Activated CD4-positive, alpha-beta T cell treated with anti-CD3 and anti-CD28 coated beads, Interleukin-2, amount 10 ng/mL, durations not matched to agents 24 days and 14 days (primary cell): ENCODE measurements at regions of chr2 and their contacts with region 1.

Region 1: GRCh38 chr2:176126929-176127773 is 2.4 kb upstream of the HOXD8 start:
- DNase-seq: peak; percentile 87
- H3K4me3 Mint-ChIP-seq: no peak overlapping the region
- H3K27ac Mint-ChIP-seq: no peak overlapping the region
- H3K4me1 Mint-ChIP-seq: peaks cover 8% of the 10 kb centered on the region
- H3K27me3 Mint-ChIP-seq: peaks cover 74% of the 10 kb centered on the region

Region 2: DNA sequence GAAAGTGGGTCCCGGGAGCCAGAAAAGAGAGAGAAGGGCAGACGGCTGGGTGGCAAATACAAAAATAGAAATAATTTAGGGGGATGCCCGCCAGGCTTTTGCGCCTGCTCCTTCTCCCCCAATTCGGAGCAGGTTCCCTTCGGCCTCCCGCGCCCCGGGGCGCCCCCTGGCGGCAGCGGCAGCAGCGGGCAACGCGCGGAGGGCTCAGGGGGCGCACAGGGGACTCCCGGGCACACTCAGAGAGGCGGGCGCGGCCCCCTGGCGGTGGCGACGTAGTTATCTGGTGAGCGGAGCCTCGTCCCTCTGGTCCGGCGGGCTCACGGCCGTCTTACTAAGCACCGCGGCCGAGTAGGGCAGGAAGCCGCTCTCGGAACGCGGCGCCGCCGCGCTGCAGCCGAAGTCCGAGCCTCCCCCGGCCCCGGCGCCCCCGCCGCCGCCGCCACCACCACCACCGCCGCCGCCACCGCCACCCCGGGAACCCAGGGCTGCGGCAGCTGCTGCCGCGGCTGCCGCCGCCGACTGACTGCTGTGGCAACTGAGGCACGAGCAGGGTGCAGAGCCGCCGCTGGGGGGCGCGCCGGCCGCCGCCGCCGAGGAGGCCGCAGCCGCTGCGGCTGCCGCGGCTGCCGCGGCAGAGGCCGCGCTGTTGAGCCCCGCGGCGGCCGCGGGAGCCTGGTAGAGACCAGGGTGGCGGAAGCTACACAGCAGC is 47.2 kb before region 1 on chr2:
- intact Hi-C with region 1: loop called (anchors 1 kb)
- DNase-seq: peak; percentile 70
- H3K4me3 Mint-ChIP-seq: peak overlapping the region; percentile 53
- H3K27ac Mint-ChIP-seq: peak overlapping the region; percentile 88
- H3K4me1 Mint-ChIP-seq: peaks cover 12% of the 10 kb centered on the region
- H3K27me3 Mint-ChIP-seq: peaks cover 69% of the 10 kb centered on the region

Region 3: GRCh38 chr2:176140513-176141317 is 13.6 kb after region 1 on chr2:
- intact Hi-C with region 1: no loop called
- DNase-seq: peak; percentile 92
- H3K4me3 Mint-ChIP-seq: peak overlapping the region; percentile 20
- H3K27ac Mint-ChIP-seq: no peak overlapping the region
- H3K4me1 Mint-ChIP-seq: peaks cover 4% of the 10 kb centered on the region
- H3K27me3 Mint-ChIP-seq: peaks cover 72% of the 10 kb centered on the region

Region 4: GRCh38 chr2:176157499-176158185 is 30.5 kb after region 1 on chr2:
- intact Hi-C with region 1: loop called (anchors 5 kb)
- DNase-seq: peak; percentile 66
- H3K4me3 Mint-ChIP-seq: no peak overlapping the region
- H3K27ac Mint-ChIP-seq: peak overlapping the region; percentile 72
- H3K4me1 Mint-ChIP-seq: peaks cover 2% of the 10 kb centered on the region
- H3K27me3 Mint-ChIP-seq: peaks cover 82% of the 10 kb centered on the region

Region 5: DNA sequence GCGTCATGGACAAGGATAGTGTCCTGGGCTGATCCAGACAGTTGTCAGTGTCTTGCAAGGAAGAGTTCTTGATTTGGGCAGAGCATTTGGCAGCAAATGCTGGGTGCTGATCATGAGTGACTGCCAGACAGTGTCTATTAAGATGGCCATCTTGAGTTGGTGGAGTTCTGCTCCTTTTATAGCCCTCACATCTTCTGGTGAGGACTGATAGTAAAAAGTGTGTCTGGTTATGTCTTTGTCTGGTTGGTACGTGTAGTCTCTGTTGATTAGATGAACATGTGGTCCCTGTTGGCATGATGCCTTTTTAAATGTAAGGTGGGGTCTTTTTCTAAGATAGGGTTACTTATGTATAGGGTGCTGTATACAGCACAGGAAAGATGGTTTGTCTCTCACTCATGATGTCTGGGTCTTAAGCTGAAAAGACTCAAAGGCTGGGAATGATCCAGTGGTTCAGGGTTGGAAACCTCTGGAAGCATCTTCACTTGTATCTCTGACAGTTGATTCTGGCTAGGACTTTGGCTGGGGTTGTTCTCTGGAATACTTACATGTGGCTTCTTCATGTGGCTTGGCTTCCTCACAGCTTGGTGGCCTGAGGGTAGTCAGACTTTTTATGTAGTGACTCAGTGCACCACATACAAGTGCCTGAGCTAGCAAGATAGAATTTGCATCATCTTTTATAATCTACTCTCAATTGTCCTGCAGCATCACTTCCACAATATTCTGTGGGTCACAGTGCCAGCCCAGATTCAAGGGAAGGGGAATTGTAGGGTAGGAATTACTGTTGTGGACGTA is 153.9 kb after region 1 on chr2:
- intact Hi-C with region 1: no loop called
- DNase-seq: no peak
- H3K4me3 Mint-ChIP-seq: no peak overlapping the region
- H3K27ac Mint-ChIP-seq: no peak overlapping the region
- H3K4me1 Mint-ChIP-seq: peaks cover 21% of the 10 kb centered on the region
- H3K27me3 Mint-ChIP-seq: no peaks in the 10 kb centered on the region

Region 6: DNA sequence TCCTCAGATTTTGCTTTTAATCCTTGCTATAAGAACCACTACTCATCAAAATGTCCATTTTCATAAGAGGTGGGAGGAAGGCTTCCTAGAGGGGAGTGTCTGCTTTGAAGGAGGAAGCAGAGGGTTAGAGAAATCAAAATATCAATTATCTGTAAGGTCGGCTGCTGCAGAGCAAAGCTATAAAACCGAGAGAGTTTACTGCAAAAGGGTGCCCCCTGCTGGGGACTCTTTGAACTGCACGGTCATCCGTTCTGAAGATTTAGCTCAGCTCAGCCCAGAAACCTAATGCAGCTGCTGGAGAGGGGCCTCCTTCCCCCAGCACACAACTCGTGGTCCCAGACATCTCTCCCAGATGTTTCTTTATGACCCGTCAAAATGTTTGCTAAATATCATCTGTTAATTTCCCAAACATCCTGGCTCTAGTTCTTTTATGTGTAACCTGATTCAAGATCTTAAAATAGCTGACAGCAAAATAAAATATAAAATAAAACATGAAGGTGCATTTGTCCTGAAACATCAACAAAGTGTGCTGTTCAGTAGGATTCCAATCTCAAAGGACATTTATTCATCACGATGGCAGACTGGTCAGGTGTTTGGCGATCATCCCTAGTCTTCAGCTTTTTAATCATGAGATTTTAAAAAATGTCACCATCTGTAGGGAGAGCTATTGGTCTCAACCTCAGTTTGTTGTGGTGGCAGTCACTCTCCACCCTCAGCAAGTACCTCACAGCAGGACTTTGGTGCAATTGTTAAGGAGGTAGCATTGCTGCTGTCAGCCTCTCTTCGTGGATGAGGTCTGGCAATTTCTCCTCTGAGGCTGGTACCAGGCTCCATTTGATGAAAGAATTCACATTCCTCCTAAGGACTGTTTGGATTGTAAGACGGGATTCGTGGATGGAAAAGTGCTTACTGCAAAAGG is 328.0 kb after region 1 on chr2:
- intact Hi-C with region 1: loop called (anchors 1 kb)
- DNase-seq: peak; percentile 93
- H3K4me3 Mint-ChIP-seq: no peak overlapping the region
- H3K27ac Mint-ChIP-seq: no peak overlapping the region
- H3K4me1 Mint-ChIP-seq: no peaks in the 10 kb centered on the region
- H3K27me3 Mint-ChIP-seq: peaks cover 41% of the 10 kb centered on the region

Region 7: GRCh38 chr2:176653479-176654443 is 526.6 kb after region 1 on chr2:
- intact Hi-C with region 1: loop called (anchors 1 kb)
- DNase-seq: peak; percentile 69
- H3K4me3 Mint-ChIP-seq: no peak overlapping the region
- H3K27ac Mint-ChIP-seq: no peak overlapping the region
- H3K4me1 Mint-ChIP-seq: peaks cover 10% of the 10 kb centered on the region
- H3K27me3 Mint-ChIP-seq: peaks cover 46% of the 10 kb centered on the region

Region 8: DNA sequence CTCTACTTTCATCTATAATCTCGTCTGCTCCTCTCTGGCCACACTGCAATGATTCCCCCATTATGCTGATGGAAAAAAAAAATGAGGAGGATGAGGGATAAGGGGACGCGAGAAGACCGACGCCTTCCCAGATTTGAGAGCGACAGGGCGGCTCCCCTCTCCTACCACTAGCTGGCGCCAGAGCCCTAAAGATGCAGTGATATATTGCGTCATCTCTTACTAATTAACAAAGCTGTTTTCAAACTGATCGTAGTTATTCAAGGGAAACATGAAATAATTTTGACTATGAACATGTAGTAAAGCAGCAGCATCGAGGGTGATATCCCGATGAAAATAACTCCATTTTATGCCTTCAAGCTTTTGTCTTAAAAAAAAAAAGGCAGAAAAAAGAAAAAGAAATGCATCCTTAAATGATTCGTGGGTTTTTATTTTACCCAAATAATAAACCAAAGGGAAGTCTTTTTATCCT is 1037.5 kb after region 1 on chr2:
- intact Hi-C with region 1: loop called (anchors 5 kb)
- DNase-seq: peak; percentile 94
- H3K4me3 Mint-ChIP-seq: no peak overlapping the region
- H3K27ac Mint-ChIP-seq: no peak overlapping the region
- H3K4me1 Mint-ChIP-seq: peaks cover 27% of the 10 kb centered on the region
- H3K27me3 Mint-ChIP-seq: peaks cover 11% of the 10 kb centered on the region